GM12878 (cell line): ENCODE measurements at regions of chr2 and their contacts with region 1.

Region 1: GRCh38 chr2:166895243-166895642 is 7.0 kb downstream of the XIRP2 start:
- DNase-seq: no peak
- ATAC-seq: 0 out of 3 replicates have a peak, but pooled peaks have one; percentile 23
- H3K4me3 ChIP-seq: no peak overlapping the region
- H3K27ac ChIP-seq: no peak overlapping the region
- H3K4me1 ChIP-seq: no peaks in the 10 kb centered on the region
- H3K27me3 ChIP-seq: no peaks in the 10 kb centered on the region
- CTCF ChIP-seq: no peak
- EP300 ChIP-seq: no peak
- POLR2A ChIP-seq: no peak
- RAD21 ChIP-seq: no peak

Region 2: DNA sequence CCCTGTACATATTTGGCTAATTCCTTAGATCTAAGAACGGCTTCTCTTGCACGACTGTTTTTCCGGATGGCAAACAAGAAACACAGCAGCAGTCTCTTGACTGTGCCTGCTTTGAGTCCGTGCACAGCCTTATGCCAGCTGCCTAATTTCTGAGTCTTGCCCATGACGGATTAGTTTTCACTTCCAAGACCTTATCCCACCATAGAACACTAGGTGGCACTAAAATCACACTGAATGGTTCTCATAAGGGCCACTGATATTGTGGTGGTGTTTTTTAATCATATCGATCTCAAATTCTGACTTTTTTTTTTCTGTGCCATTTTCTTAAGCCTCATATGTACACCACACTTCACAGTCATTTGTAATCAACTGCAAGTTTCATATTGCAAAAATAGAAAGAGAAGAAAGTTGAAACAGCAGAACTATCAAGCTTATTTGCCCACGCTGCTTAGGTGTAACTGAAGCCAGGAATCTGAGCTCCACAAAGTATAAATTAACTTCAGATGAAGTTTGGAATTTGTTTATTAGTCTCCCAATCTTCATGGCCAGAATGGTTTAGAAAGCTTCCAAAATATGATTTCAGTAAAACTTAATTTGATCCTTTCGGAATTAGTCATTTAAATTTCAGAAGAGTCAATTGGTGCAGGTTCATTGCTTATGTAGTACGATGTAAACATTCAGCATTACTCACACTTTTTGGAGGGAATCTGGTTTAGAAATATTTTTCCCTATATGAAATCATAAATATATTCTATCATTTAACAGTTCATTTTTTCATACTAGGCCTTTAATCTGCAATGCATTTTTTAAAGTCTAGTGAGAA is 355.7 kb before region 1 on chr2:
- CTCF ChIA-PET with region 1: no interaction called
- POLR2A ChIA-PET with region 1: no interaction called
- RAD21 ChIA-PET with region 1: no interaction called
- SMC1A ChIA-PET with region 1: interaction called, 3 read pairs
- in situ Hi-C with region 1: no loop called
- intact Hi-C with region 1: loop called (anchors 10 kb)
- DNase-seq: peak; percentile 12
- ATAC-seq: peak; percentile 94
- H3K4me3 ChIP-seq: no peak overlapping the region
- H3K27ac ChIP-seq: no peak overlapping the region
- H3K4me1 ChIP-seq: no peaks in the 10 kb centered on the region
- H3K27me3 ChIP-seq: no peaks in the 10 kb centered on the region
- CTCF ChIP-seq: peak; percentile 71 to 83 (median 74)
- EP300 ChIP-seq: no peak
- POLR2A ChIP-seq: no peak
- RAD21 ChIP-seq: peak; percentile 90

Region 3: GRCh38 chr2:166700079-166700478 is 195.2 kb before region 1 on chr2:
- CTCF ChIA-PET with region 1: interaction called, 5 read pairs
- POLR2A ChIA-PET with region 1: no interaction called
- RAD21 ChIA-PET with region 1: interaction called, 3 read pairs
- SMC1A ChIA-PET with region 1: interaction called, 10 read pairs
- in situ Hi-C with region 1: no loop called
- intact Hi-C with region 1: no loop called
- DNase-seq: no peak
- ATAC-seq: peak; percentile 42; the same call in 1 of the 3 replicates
- H3K4me3 ChIP-seq: no peak overlapping the region
- H3K27ac ChIP-seq: no peak overlapping the region
- H3K4me1 ChIP-seq: no peaks in the 10 kb centered on the region
- H3K27me3 ChIP-seq: no peaks in the 10 kb centered on the region
- CTCF ChIP-seq: peak in 1 of 3 experiments; percentile 56; a peak in 2 of 6 replicates
- EP300 ChIP-seq: no peak
- POLR2A ChIP-seq: no peak
- RAD21 ChIP-seq: peak; percentile 53